Dendritic cell treated with granulocyte-macrophage colony-stimulating factor and Interleukin-4, amounts not matched to agents 40 ng/mL and 50 ng/mL, for 4 days (primary cell): ENCODE measurements at regions of chr11 and their contacts with region 1.

Region 1: DNA sequence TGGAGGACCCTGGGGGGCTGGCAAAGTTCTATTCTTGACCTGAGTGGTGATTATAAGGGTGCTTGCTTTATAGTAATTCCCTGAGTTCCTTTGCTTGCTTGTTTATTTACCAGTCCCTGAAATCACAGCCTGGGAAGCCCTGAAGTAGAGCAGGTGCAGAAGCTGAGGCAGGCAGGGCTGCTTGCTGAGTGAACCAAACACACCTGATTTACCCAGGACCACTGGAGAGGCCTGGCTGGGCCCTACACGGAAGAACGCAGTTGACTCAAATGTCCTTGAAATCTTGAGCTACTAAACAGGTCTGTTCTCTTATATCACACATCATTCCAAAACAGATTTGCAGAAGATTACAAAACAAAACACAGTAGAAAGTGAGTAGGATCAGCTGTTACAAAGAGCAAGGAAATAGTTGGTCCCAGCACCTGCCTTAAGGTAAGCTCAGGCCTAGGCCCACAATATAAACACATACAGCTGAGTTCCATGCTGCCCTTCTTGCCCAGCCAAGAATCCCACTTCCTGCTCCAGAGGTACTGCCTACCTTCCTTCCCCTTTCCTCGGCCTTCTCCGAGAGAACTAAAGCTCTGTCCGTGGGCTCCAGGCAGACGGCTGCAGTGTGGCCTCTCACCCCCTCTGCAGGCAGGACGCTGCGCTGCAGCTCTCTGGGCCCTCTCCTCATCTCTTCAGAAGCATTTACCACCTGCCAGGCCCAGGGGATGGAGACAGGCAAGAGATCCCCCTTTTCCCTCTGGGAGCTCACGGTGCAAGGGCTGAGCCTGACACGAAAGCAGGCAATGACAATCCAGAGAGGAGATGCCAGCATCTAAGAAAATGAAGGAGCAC is 46.1 kb upstream of the SCUBE2 start:
- H3K4me3 Mint-ChIP-seq: no peak overlapping the region
- H3K27ac Mint-ChIP-seq: no peak overlapping the region
- H3K4me1 Mint-ChIP-seq: peaks cover 22% of the 10 kb centered on the region
- H3K27me3 Mint-ChIP-seq: no peaks in the 10 kb centered on the region

Region 2: DNA sequence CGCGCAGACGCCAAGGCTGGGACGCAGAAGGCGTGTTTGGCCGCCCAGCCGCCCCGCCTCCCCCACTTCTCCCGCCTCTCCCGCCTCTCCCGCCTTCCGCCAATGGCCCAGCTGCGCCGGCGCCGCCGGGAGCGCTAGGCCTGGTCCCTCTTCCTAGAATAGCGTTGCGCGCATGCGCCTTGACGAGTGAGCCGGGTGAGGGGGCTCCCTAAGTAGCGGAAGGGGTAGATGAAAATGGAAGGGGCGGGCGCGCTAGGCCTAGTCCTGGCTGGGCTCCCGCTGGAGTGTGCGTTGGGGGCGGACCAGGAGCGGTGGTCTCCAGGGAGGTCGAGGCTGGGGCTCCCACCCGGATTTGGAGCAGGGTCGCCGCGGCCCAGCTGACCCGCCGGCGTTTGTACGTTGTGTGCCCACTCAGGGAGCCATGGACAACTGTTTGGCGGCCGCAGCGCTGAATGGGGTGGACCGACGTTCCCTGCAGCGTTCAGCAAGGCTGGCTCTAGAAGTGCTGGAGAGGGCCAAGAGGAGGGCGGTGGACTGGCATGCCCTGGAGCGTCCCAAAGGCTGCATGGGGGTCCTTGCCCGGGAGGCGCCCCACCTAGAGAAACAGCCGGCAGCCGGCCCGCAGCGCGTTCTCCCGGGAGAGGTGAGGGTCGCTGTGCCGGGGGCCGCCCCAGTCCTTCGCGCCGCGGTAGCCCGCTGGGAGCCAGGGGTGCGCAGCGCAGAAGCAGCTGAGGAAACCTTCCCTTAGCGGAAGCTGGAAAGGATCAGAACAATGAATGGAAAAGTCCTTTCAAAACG is 226.3 kb before region 1 on chr11 and contains the start of gene AKIP1:
- intact Hi-C with region 1: loop called (anchors 2 kb)
- H3K4me3 Mint-ChIP-seq: peak within 1 kb of the TSS; percentile 95
- H3K27ac Mint-ChIP-seq: peak within 1 kb of the TSS; percentile 92
- H3K4me1 Mint-ChIP-seq: peaks cover 47% of the 10 kb centered on the region
- H3K27me3 Mint-ChIP-seq: peaks cover 13% of the 10 kb centered on the region

Region 3: DNA sequence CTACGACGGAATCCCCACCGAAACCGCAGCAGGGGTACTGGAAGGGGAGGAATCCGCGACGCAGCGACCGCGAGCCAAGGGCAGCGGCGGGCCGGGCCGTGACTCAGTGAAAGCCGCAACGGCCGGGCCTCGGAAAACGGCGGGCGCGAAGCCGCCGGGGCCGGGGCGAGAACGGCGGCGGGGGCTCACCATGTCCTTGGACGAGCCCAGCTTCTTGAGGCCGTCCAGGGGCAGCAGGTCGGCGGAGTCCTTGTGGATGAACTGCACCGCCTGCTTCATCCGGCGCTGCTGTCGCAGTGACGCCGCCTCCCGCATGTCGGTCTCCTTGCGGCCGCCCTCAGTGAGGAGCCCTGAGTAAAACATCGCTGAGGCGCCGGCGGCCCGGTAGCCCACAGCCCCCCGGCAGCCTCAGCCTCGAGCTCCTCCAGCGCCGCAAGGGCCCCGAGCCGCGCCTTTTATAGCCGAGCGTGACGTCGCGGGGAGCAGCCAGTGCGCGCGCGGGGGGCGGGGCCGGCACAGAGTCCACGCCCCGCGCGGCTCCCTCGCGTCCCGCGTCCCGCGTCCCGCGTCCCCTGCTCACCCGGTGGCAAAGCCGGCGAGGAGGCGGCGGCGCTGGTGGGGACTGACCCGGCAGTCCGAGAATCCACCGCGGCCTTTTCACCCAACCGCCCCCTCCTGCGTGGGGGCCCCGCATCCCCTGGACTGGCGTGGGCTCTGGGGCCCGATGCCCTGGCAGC is 133.8 kb before region 1 on chr11 and contains the start of gene NRIP3:
- intact Hi-C with region 1: loop called (anchors 5 kb)
- H3K4me3 Mint-ChIP-seq: peak within 1 kb of the TSS; percentile 71
- H3K27ac Mint-ChIP-seq: peak within 1 kb of the TSS; percentile 74
- H3K4me1 Mint-ChIP-seq: peaks cover 15% of the 10 kb centered on the region
- H3K27me3 Mint-ChIP-seq: peaks cover 34% of the 10 kb centered on the region

Region 4: GRCh38 chr11:9015677-9016076 is 121.8 kb before region 1 on chr11:
- intact Hi-C with region 1: loop called (anchors 1 kb)
- H3K4me3 Mint-ChIP-seq: no peak overlapping the region
- H3K27ac Mint-ChIP-seq: no peak overlapping the region
- H3K4me1 Mint-ChIP-seq: peaks cover 32% of the 10 kb centered on the region
- H3K27me3 Mint-ChIP-seq: peaks cover 4% of the 10 kb centered on the region

Region 5: GRCh38 chr11:9047964-9048523 is 89.5 kb before region 1 on chr11:
- intact Hi-C with region 1: no loop called
- H3K4me3 Mint-ChIP-seq: no peak overlapping the region
- H3K27ac Mint-ChIP-seq: no peak overlapping the region
- H3K4me1 Mint-ChIP-seq: peaks cover 3% of the 10 kb centered on the region
- H3K27me3 Mint-ChIP-seq: peaks cover 5% of the 10 kb centered on the region

Region 6: DNA sequence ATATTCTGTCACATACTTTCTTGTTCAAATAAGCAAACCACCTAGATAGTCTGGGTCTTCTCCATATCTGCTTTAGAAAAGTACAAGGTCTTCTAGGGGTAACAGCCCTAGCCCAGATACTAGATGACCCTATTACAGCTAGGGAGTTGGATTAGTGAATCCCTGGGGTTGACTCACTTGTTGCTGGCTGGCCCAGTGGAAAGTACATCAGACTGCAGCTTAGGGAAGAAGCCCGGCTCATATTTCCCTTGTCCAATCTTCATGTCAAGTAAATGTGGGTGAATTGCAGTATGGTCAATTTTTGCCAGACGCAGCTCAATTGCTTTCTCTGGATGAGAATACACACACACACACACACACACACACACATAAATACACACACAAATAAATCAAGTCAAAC is 32.9 kb after region 1 on chr11:
- intact Hi-C with region 1: no loop called
- H3K4me3 Mint-ChIP-seq: no peak overlapping the region
- H3K27ac Mint-ChIP-seq: no peak overlapping the region
- H3K4me1 Mint-ChIP-seq: peaks cover 17% of the 10 kb centered on the region
- H3K27me3 Mint-ChIP-seq: no peaks in the 10 kb centered on the region

Region 7: DNA sequence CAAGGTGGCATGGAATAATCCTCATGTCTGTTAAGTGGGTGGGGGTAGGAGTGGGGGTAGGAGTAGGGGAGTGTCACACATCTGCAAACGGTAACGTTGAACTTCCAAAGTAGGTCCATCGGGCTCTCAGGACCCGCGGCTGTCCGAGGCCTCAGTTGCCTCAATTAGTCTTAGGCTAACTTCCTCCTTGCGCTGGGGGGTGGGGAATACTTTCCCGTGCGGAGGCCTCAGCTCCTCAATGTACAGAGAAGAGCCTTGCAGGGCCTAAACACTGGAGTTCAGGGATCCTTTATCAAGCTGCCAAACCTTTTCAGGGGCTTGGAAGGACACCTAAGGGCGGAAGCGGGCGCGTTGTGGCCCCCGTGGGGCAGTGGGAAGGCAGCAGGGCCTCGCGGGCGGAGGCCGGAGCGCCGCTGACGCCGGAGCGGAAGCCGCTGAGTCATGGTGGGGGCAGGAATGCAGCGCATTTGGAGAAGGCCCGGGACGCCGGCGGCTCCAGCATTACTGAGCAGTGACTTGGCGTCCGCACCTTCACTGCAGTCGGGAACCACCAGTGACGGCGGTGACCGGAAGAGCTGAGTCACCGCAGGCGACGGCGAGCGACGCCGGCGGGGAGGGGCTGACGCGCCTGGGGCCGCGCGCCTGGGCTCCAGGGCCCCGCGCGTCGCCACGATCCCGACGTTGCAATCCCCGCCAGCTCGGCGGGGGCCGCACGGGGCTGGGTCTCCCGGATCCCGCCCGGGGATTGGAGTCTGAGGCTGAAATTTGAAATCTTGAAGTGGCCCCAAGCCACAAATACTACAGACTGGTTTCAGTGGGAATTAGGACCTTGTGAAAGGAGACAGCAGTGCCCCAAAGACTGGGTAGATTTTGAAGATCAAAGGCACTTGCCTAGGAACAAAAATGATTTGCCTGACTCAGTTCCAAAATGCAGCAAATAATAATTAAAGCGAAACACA is 226.7 kb after region 1 on chr11:
- intact Hi-C with region 1: no loop called
- H3K4me3 Mint-ChIP-seq: peak overlapping the region; percentile 78
- H3K27ac Mint-ChIP-seq: peak overlapping the region; percentile 99
- H3K4me1 Mint-ChIP-seq: peaks cover 26% of the 10 kb centered on the region
- H3K27me3 Mint-ChIP-seq: no peaks in the 10 kb centered on the region

Region 8: DNA sequence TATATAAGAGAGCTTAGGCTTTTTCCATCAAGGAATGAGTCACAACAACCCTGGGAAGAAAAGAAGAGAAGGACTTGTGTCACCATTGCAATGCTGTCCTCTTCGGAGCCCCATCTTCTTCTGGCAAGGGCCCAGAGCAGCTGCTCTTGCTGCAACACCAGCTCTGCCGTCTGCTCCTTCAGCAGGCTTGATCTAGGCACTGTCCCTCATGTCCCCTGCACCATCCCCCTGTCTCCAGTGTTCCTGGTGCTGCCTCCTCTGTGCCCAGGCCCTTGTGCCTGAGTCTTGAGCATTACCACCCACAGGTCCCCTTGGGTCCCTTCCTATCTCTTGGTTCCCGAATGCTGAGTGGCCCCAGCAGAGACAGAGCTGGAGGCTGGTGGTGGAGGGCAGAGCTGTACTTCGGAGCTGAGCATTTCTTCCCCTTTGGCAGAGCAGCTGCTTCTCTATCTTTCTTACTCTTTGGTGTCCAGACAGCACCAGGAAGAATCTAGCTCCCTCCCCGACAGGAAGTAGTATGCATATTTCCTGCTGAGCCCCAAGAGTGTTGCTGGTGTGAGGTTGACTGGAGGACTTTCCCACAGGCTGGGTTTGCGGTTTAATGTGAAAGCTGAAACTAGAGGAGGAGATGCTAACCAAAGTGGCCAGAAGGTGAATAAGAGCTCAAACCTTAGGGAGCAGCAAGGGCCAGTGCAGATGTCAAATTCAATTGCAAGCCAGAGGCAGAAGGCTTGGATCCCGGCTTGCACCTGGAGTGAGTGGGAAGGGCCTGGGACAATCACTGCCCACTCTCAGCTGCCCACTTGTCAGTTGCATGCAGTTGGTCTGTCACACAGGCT is 463.7 kb after region 1 on chr11:
- intact Hi-C with region 1: no loop called
- H3K4me3 Mint-ChIP-seq: peak overlapping the region; percentile 61
- H3K27ac Mint-ChIP-seq: peak overlapping the region; percentile 93
- H3K4me1 Mint-ChIP-seq: peaks cover 26% of the 10 kb centered on the region
- H3K27me3 Mint-ChIP-seq: no peaks in the 10 kb centered on the region